IMR-90 (cell line): ENCODE measurements at regions of chr18 and their contacts with region 1.

Region 1: GRCh38 chr18:49479381-49480137 is 7.5 kb downstream of the C18orf32 start:
- DNase-seq: no peak
- ATAC-seq: no peak
- H3K4me3 ChIP-seq: no peak overlapping the region
- H3K27ac ChIP-seq: no peak overlapping the region
- H3K4me1 ChIP-seq: no peaks in the 10 kb centered on the region
- H3K27me3 ChIP-seq: no peaks in the 10 kb centered on the region
- CTCF ChIP-seq: no peak
- POLR2A ChIP-seq: no peak
- RAD21 ChIP-seq: no peak

Region 2: GRCh38 chr18:49464718-49465598 is 14.6 kb before region 1 on chr18:
- CTCF ChIA-PET with region 1: interaction called, 4 read pairs
- POLR2A ChIA-PET with region 1: no interaction called
- dilution Hi-C with region 1: no loop called
- in situ Hi-C with region 1: no loop called
- intact Hi-C with region 1: loop called (anchors 1 kb)
- DNase-seq: peak; percentile 28
- ATAC-seq: 0 out of 2 replicates have a peak, but pooled peaks have one; percentile 16
- H3K4me3 ChIP-seq: no peak overlapping the region
- H3K27ac ChIP-seq: no peak overlapping the region
- H3K4me1 ChIP-seq: no peaks in the 10 kb centered on the region
- H3K27me3 ChIP-seq: no peaks in the 10 kb centered on the region
- CTCF ChIP-seq: no peak
- POLR2A ChIP-seq: no peak
- RAD21 ChIP-seq: no peak

Region 3: GRCh38 chr18:49832221-49832647 is 352.7 kb after region 1 on chr18:
- CTCF ChIA-PET with region 1: no interaction called
- POLR2A ChIA-PET with region 1: no interaction called
- dilution Hi-C with region 1: no loop called
- in situ Hi-C with region 1: no loop called
- intact Hi-C with region 1: no loop called
- DNase-seq: no peak
- ATAC-seq: no peak
- H3K4me3 ChIP-seq: no peak overlapping the region
- H3K27ac ChIP-seq: no peak overlapping the region
- H3K4me1 ChIP-seq: peaks cover 5% of the 10 kb centered on the region; the same call in 1 of the 2 replicates
- H3K27me3 ChIP-seq: no peaks in the 10 kb centered on the region
- CTCF ChIP-seq: no peak
- POLR2A ChIP-seq: no peak
- RAD21 ChIP-seq: no peak